Ovary (tissue), 10 donors: ENCODE measurements at regions of chr9 and their contacts with region 1.

Region 1: DNA sequence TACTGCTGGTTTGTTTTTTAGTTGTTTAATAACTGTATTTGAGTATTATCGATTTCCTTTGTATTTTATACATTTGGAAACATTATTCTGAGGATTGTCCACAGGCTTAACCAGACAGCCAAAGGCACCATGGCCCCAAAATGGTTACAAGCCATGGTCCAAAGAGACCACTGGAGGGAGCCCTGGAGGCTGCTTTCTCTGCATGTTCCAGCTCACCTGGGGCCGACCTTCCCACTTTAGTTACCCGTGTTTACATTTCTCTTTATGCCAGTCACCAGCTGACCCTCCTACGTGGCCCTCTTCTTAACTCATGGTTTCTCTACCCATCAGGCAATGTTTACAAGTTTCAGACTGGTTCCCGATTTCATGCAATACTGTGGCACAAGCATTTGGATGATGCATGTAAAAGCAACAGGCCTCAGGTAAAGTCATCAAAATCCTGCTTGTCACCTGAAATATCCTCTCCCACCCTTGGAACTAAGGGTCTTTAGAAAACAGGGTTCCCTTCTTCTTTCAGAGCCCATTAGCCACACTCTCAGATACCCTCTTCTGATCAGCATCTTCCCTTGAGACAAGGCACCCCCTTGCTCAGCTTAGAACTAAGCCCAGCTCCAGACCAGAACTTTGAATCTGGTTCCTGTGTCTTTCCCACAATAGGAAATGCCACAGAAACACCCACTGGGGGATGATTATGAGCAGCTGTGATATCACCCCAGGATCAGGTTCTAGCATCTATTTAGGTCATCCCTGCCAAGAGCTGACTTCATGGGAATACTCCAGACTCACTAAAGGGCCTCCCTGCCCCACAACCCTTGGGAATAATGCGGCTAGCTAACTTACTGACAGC is 49.9 kb upstream of the GARNL3 start:
- DNase-seq: peak in 2 of 5 donors; percentile 51 to 56
- H3K4me3 ChIP-seq: no peak overlapping the region
- H3K27ac ChIP-seq: no peak overlapping the region
- H3K4me1 ChIP-seq: no peaks in the 10 kb centered on the region
- H3K27me3 ChIP-seq: no peaks in the 10 kb centered on the region
- CTCF ChIP-seq: peak; percentile 19 to 52 (median 27)
- EP300 ChIP-seq: no peak
- POLR2A ChIP-seq: no peak

Region 2: DNA sequence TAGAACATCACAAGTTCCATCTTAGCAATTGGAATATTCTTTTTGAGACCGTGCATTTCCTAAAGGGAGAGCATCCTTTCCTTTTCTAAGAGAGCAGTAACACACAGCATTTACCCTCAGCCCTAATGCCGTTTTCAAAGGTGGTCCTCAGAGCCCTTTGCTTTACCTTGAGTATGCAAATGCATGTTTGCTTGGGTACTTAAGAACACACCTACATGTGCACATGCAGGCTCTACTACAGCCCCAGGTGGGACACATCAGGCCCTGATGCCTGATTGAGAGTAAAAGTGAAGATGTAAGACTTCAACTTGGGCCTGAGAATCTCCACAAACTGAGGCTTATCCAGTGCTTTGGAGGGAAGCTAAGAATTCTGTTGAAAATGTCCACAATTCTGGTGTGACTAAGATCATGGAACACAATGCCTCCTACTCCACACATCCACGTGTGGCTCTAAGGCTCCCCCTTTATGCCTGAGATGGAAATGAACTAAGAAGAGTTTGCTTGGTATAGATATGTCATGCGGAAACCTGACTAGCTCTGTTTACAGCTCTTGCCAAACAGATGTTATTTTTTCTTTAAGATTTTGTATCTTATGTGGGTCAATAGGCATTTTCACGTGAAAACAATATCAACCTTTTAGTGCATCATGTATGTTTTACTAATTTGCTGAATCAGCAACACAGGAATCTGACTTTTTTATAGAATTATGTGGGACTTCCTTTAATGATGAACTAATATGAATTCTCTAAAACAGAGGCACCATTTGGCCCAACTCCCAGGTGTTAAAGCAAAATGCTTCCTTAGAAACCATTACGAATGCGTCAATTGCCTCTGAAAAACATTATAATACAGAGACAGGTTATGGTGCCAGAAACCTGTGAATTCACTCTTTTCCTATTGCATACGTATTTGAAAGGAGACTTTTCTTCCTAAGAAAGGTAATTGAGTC is 133.5 kb after region 1 on chr9:
- intact Hi-C with region 1: loop called in 2 of 4 experiments (anchors 5 to 10 kb)
- DNase-seq: no peak
- H3K4me3 ChIP-seq: no peak overlapping the region
- H3K27ac ChIP-seq: no peak overlapping the region
- H3K4me1 ChIP-seq: no peaks in the 10 kb centered on the region
- H3K27me3 ChIP-seq: no peaks in the 10 kb centered on the region
- CTCF ChIP-seq: peak in 1 of 3 donors; percentile 11
- EP300 ChIP-seq: no peak
- POLR2A ChIP-seq: no peak